ENCODE measurements at regions of chr10 and their contacts with region 1.

Region 1: DNA sequence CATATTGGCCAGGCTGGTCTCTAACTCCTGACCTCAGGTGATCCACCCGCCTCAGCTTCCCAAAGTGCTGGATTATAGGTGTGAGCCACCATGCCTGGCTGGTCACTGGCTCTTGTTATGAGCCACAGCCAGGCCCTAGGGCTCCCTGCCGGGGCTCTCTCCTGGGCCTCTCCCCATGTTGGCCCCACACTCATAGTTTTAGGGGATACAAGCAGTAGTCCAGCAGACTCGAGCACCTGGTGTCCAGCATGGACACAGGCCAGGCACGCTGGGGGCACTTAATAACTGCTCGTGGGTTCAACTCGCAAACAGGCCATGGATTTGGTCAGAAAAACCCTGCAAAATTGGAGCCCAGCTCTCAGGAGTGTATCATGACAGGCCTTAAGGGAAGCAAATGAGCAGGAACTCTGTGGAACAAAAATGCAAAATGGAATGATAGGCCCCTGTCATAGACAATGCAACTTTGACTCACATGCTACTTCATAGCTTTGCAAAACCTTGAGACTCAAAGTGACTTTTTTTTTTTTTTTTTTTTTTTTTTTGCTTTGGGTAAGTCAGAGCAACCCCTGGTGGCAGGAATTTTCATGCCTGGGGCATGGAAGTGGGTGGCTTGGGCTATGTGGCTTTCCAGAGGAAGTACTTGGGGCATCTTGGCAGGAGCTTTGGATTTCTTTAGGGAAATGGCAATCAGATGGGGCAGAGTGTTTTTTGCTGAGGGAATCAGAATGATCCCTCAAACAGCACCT is 62.5 kb downstream of the TACC2 start:
- DNase-seq: peak in 1 of 2 experiments; percentile 68
- H3K4me3 ChIP-seq: no peak overlapping the region
- H3K27ac ChIP-seq: no peak overlapping the region
- H3K4me1 ChIP-seq: peaks cover 0 to 9% (median 4%) of the 10 kb centered on the region in 4 experiments; a peak in 5 of 7 replicates
- H3K27me3 ChIP-seq: no peaks in the 10 kb centered on the region
- CTCF ChIP-seq: peak; percentile 63 to 83 (median 72)
- EP300 ChIP-seq: 0 out of 3 replicates have a peak, but pooled peaks of 1 of the 2 experiments have one; percentile 28
- POLR2A ChIP-seq: no peak
- RAD21 ChIP-seq: peak; percentile 45 to 66; a peak in 3 of 4 replicates

Region 2: DNA sequence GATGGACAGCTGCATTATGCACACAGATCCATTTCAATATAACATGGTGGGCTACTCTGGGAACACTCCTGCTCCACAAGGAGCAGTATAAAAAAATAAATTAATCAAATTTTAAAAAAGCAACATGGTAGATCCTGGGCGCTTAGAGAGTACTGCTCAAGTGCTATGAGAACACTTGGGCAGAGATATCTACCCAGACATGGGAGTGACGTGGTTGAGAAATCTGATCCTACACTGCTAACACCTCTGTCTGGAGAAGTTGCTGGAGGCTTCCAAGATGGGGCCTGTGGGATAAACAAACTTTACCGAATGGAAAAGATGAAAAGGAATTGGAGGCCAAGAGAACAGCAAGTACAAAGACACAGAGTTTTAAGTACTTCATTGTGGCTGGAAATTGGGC is 85.4 kb before region 1 on chr10:
- CTCF ChIA-PET with region 1: no interaction called
- POLR2A ChIA-PET with region 1: no interaction called
- DNase-seq: no peak
- H3K4me3 ChIP-seq: no peak overlapping the region
- H3K27ac ChIP-seq: no peak overlapping the region
- H3K4me1 ChIP-seq: no peaks in the 10 kb centered on the region
- H3K27me3 ChIP-seq: no peaks in the 10 kb centered on the region
- CTCF ChIP-seq: no peak
- EP300 ChIP-seq: no peak
- POLR2A ChIP-seq: no peak
- RAD21 ChIP-seq: no peak

Region 3: GRCh38 chr10:122040786-122041185 is 10.6 kb before region 1 on chr10:
- CTCF ChIA-PET with region 1: interaction called, 30 read pairs
- POLR2A ChIA-PET with region 1: interaction called, 7 read pairs
- DNase-seq: no peak
- H3K4me3 ChIP-seq: no peak overlapping the region
- H3K27ac ChIP-seq: no peak overlapping the region
- H3K4me1 ChIP-seq: peaks cover 3 to 12% (median 10%) of the 10 kb centered on the region in 4 experiments
- H3K27me3 ChIP-seq: no peaks in the 10 kb centered on the region
- CTCF ChIP-seq: no peak
- EP300 ChIP-seq: no peak
- POLR2A ChIP-seq: no peak
- RAD21 ChIP-seq: no peak

Region 4: DNA sequence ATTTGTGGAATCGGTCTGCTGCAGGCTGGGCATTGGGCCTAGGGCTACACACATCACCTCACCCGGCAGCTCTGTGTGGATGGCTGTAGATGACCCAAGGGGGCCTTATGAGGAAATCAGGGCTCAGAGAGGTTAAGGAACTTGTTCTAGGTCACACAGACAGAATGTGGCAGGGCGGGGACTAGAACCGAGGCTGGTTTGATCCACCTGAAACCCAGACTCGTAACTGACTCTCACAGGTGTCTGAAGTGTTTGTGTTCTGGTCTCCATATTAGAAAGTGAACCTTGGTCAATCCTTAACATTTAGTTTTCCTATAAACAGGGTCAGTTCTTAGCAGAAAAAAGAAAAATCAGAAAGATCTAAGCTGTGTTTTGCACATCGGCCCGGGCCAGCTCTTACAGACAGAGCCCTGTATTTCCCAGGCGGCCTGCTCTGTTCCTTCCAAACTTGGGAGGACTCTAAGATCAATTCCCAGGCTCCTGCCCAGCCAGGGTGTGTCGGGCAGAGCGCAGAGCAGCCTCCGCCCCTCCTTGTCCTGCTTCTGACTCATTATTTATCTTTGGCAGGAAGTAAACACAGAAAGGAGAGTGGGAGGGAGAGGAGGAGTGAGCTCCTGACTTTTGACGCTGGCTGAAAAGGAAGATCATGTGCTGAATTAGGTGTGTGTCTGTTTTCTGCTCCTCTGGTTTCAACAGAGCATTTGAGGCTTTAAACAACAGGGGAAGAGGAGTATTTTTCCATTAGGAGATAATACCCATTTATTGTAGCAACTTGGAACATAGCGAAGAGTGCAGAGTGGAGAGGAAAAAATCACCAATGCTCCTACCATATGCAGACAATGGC is 11.6 kb after region 1 on chr10:
- CTCF ChIA-PET with region 1: interaction called, 23 read pairs
- POLR2A ChIA-PET with region 1: no interaction called
- DNase-seq: peak in 1 of 2 experiments; percentile 50
- H3K4me3 ChIP-seq: no peak overlapping the region
- H3K27ac ChIP-seq: peak overlapping the region; percentile 47; the same call in 1 of the 2 replicates
- H3K4me1 ChIP-seq: peaks cover 0 to 7% (median 3%) of the 10 kb centered on the region in 4 experiments; a peak in 4 of 7 replicates
- H3K27me3 ChIP-seq: no peaks in the 10 kb centered on the region; a peak in 1 of 7 replicates
- CTCF ChIP-seq: no peak
- EP300 ChIP-seq: no peak
- POLR2A ChIP-seq: no peak
- RAD21 ChIP-seq: no peak

Region 5: GRCh38 chr10:122072491-122072890 is 21.1 kb after region 1 on chr10:
- CTCF ChIA-PET with region 1: interaction called, 11 read pairs
- POLR2A ChIA-PET with region 1: no interaction called
- DNase-seq: no peak
- H3K4me3 ChIP-seq: no peak overlapping the region
- H3K27ac ChIP-seq: no peak overlapping the region
- H3K4me1 ChIP-seq: no peaks in the 10 kb centered on the region
- H3K27me3 ChIP-seq: no peaks in the 10 kb centered on the region
- CTCF ChIP-seq: no peak
- EP300 ChIP-seq: no peak
- POLR2A ChIP-seq: no peak
- RAD21 ChIP-seq: no peak

Region 6: DNA sequence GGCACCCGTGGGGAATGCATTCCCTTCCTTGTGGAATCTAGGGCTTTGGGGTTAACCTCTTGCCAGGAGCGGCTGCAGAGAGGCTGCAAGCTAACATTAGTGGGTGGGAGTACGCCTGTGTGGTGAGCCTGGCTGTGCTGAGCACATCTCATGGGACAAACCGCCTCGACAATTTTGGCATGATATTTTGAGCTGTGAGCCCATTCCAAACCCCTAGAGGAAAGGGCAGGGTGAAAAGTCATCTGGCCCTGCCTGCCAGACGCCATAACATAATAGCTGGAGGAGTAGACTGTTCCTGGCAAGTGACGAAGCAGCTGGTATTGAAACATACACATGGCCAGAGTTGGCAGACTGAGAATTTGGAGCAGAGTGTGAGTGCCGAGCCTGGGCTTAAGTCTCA is 47.5 kb after region 1 on chr10:
- CTCF ChIA-PET with region 1: interaction called, 17 read pairs
- POLR2A ChIA-PET with region 1: no interaction called
- DNase-seq: no peak
- H3K4me3 ChIP-seq: no peak overlapping the region
- H3K27ac ChIP-seq: no peak overlapping the region
- H3K4me1 ChIP-seq: no peaks in the 10 kb centered on the region
- H3K27me3 ChIP-seq: no peaks in the 10 kb centered on the region
- CTCF ChIP-seq: no peak
- EP300 ChIP-seq: no peak
- POLR2A ChIP-seq: no peak
- RAD21 ChIP-seq: no peak

Region 7: DNA sequence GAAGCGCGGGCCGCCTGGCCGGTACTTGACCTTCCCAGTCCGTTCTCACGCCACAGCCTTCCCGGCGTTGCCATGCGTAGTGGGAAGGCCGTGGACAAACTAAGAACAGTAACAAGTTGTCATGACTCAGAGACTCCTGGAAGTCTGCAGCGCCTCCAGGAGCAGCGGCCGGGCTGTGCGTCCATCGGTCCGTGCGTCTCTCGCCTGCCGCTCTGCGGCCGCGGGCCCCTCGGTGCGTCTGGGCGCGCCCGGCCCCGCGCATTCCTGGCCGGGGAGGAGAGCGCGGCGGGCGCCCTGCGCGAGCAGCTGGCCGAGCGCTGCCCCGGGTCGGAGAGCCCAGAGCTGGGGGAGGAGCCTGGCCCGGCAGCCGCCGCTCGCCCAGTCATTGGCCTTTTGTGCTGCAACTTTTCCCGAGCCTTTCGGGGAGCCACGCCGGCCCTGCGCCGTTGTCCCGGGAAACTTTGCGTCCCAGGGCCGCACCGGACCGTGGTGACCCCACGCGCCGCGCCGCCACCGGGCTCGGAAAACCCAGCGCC is 61.3 kb after region 1 on chr10:
- CTCF ChIA-PET with region 1: interaction called, 11 read pairs
- POLR2A ChIA-PET with region 1: interaction called, 3 read pairs
- DNase-seq: peak; percentile 58 to 80
- H3K4me3 ChIP-seq: peak overlapping the region; percentile 66 to 96 (median 74)
- H3K27ac ChIP-seq: peak overlapping the region; percentile 71; the same call in 1 of the 2 replicates
- H3K4me1 ChIP-seq: peaks cover 0 to 6% (median 2%) of the 10 kb centered on the region in 4 experiments; a peak in 5 of 7 replicates
- H3K27me3 ChIP-seq: no peaks in the 10 kb centered on the region; a peak in 3 of 7 replicates
- CTCF ChIP-seq: peak; percentile 49 to 84 (median 49)
- EP300 ChIP-seq: no peak
- POLR2A ChIP-seq: no peak; a peak in 1 of 3 replicates
- RAD21 ChIP-seq: peak; percentile 54 to 63